ENCODE measurements at regions of chr4 and their contacts with region 1.

Region 1: GRCh38 chr4:88514557-88515511 is 8.7 kb downstream of the PYURF start:
- DNase-seq: no peak
- H3K4me3 ChIP-seq: no peak overlapping the region
- H3K27ac ChIP-seq: no peak overlapping the region
- H3K4me1 ChIP-seq: no peaks in the 10 kb centered on the region; a peak in 1 of 4 replicates
- H3K27me3 ChIP-seq: no peaks in the 10 kb centered on the region
- CTCF ChIP-seq: no peak
- EP300 ChIP-seq: no peak
- RAD21 ChIP-seq: no peak

Region 2: GRCh38 chr4:88225232-88226105 is 289.4 kb before region 1 on chr4:
- CTCF ChIA-PET with region 1: interaction called, 48 read pairs
- POLR2A ChIA-PET with region 1: no interaction called
- DNase-seq: no peak
- H3K4me3 ChIP-seq: no peak overlapping the region
- H3K27ac ChIP-seq: no peak overlapping the region
- H3K4me1 ChIP-seq: no peaks in the 10 kb centered on the region
- H3K27me3 ChIP-seq: no peaks in the 10 kb centered on the region
- CTCF ChIP-seq: no peak
- EP300 ChIP-seq: no peak
- RAD21 ChIP-seq: no peak

Region 3: DNA sequence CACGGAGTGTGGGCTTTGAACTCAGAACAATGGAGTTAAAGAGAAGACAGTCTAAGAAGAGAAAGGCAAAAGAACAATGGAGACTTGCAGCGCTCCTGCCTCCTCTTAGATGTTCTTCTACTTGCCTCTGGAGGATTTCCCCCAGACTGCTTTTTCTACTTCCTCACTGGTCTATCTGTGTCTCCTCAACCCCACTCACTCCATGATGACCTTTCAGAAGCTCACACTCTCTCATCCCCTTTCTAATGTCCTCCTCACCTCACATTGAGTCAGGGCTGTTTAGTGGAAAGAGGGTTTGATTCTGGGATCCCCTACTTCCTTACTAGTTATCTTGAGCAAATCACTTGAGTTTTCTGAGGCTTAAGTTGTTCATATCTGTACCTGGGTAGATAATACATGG is 148.4 kb before region 1 on chr4:
- CTCF ChIA-PET with region 1: interaction called, 66 read pairs
- POLR2A ChIA-PET with region 1: no interaction called
- DNase-seq: no peak
- H3K4me3 ChIP-seq: no peak overlapping the region
- H3K27ac ChIP-seq: no peak overlapping the region
- H3K4me1 ChIP-seq: no peaks in the 10 kb centered on the region
- H3K27me3 ChIP-seq: no peaks in the 10 kb centered on the region; the same call in 1 of the 2 replicates
- CTCF ChIP-seq: no peak
- EP300 ChIP-seq: no peak
- RAD21 ChIP-seq: no peak

Region 4: GRCh38 chr4:88446124-88446523 is 68.7 kb before region 1 on chr4:
- CTCF ChIA-PET with region 1: interaction called, 11 read pairs
- POLR2A ChIA-PET with region 1: no interaction called
- DNase-seq: no peak
- H3K4me3 ChIP-seq: no peak overlapping the region
- H3K27ac ChIP-seq: no peak overlapping the region
- H3K4me1 ChIP-seq: no peaks in the 10 kb centered on the region
- H3K27me3 ChIP-seq: no peaks in the 10 kb centered on the region
- CTCF ChIP-seq: no peak
- EP300 ChIP-seq: no peak
- RAD21 ChIP-seq: no peak

Region 5: GRCh38 chr4:88477229-88477860 is 37.5 kb before region 1 on chr4:
- CTCF ChIA-PET with region 1: interaction called, 11 read pairs
- POLR2A ChIA-PET with region 1: no interaction called
- DNase-seq: no peak
- H3K4me3 ChIP-seq: no peak overlapping the region
- H3K27ac ChIP-seq: no peak overlapping the region
- H3K4me1 ChIP-seq: no peaks in the 10 kb centered on the region
- H3K27me3 ChIP-seq: no peaks in the 10 kb centered on the region
- CTCF ChIP-seq: no peak
- EP300 ChIP-seq: no peak
- RAD21 ChIP-seq: no peak